GM23248 (cell line): ENCODE measurements at regions of chr9 and their contacts with region 1.

Region 1: GRCh38 chr9:69444021-69444420 is 119.0 kb downstream of the ENTREP1 start:
- DNase-seq: peak; percentile 89
- H3K4me3 ChIP-seq: no peak overlapping the region
- H3K27ac ChIP-seq: no peak overlapping the region
- H3K4me1 ChIP-seq: peaks cover 9% of the 10 kb centered on the region; the same call in 1 of the 2 replicates
- H3K27me3 ChIP-seq: no peaks in the 10 kb centered on the region

Region 2: DNA sequence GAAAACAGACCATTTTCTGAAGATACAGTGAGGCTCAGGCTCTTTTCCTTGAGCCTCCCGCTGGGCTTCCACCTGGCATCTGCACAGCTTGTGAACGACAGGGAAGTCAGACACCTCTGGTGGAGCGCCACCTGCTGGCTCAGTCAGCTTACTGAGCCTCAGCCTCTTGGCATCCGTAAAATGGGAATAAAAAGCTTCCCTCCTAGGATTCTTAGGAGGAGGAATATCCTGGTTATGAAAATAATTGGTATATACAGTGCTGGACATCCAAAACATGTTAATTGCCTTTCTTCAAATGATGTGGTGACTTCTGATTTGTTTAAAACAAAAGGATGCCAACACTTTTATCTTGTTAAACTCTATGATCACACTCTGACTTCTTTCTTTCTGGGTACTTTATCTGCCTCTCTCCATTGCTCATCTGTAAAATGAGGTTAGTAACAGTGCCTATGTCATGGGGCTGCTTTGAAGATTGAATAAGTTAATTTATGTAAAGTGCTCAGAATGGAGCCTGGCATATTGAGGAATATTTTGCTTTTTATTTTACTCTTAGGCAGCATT is 667.1 kb after region 1 on chr9:
- in situ Hi-C with region 1: loop called (anchors 25 kb)
- DNase-seq: peak; percentile 75
- H3K4me3 ChIP-seq: no peak overlapping the region
- H3K27ac ChIP-seq: no peak overlapping the region
- H3K4me1 ChIP-seq: peaks cover 7% of the 10 kb centered on the region
- H3K27me3 ChIP-seq: no peaks in the 10 kb centered on the region